ENCODE measurements at regions of chr18 and their contacts with region 1.

Region 1: DNA sequence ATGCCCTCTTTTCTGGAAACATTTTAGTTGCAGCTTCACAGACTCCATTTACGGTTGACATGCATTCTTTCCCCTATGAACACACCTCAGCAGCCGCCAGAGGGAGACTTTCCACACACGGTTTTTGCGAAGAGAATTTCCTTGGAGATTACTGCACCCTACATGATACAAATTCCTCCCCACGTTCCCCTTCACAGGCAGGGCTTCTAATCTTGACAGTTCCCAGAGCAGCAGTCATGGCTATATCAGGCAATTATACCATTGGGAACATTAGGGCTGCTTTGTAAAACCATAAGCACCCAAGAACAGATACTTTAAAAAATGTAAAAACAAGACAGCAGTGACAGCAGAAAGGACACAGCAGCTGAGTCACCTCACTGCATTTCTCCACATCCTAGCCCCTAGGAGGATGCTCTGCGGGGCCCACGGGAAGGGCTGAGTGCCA is 253.8 kb downstream of the TGIF1 start:
- DNase-seq: peak in 1 of 2 experiments; percentile 65
- H3K4me3 ChIP-seq: no peak overlapping the region
- H3K27ac ChIP-seq: no peak overlapping the region
- H3K4me1 ChIP-seq: 0 out of 7 replicates have a peak, but pooled peaks cover 0 to 2% (median 0%) of the 10 kb centered on the region in 4 experiments
- H3K27me3 ChIP-seq: no peaks in the 10 kb centered on the region
- CTCF ChIP-seq: peak; percentile 51 to 76 (median 73)
- EP300 ChIP-seq: no peak
- POLR2A ChIP-seq: no peak
- RAD21 ChIP-seq: peak; percentile 75 to 79

Region 2: DNA sequence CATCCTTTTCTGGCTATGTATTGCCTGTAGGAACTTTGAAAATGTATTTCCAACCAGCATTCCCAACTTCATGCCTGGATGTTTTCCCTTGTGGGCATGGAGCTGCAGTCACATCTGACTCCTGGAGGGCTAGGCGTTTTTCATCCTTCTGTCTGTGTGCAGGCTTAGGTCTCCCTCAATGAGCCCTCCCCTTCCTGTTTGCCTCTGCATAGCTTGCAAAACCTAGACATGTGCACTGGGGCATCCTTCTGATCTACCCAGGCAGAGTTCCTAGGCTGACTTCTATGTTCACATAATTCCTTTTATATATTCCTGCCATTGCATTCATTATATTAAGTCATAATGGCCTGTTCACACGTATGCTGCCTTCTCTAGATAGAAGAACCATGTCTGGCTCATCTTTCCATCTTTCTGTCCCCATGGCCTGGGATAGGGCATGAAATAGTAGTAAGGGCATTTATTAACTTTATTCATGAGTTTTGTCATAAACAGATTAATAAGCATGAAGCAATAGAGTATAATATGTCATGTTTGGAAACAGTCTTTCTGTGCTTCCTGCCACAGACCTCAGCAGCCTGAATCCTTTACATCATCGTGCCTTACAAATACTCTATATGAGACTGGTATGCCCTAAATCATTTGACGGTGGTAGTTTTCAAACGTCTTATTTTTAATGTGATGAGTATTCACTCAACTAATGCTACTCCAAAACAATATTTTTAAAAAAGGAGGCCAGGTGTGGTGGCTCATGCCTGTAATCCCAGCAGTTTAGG is 58.2 kb before region 1 on chr18:
- CTCF ChIA-PET with region 1: no interaction called
- POLR2A ChIA-PET with region 1: no interaction called
- DNase-seq: no peak
- H3K4me3 ChIP-seq: no peak overlapping the region
- H3K27ac ChIP-seq: no peak overlapping the region
- H3K4me1 ChIP-seq: peaks cover 0 to 8% (median 3%) of the 10 kb centered on the region in 4 experiments; a peak in 4 of 7 replicates
- H3K27me3 ChIP-seq: no peaks in the 10 kb centered on the region
- CTCF ChIP-seq: no peak
- EP300 ChIP-seq: no peak
- POLR2A ChIP-seq: no peak
- RAD21 ChIP-seq: no peak

Region 3: DNA sequence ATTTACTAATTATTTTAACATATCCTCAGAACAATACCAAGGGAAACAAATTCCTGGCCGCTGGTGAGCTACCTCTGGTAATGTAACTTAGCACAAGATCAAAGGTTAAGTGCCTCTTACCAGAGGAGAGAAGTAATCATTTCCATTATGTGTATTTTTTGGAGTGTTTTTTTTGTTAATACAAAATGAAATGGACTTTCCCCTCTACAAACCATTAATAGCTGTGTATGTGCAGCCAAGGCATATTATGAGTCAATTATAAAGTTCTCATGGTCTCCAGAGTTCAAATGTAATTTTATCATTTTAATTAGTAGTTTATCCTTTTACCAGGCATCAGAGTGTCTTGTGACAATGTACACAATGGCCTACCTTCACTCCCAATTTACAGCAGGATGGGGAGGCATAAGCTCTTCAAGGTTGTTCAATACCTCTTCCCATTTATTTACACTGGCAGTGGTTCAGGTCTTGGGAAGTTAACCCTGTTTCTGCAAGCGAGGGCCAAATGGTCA is 11.6 kb before region 1 on chr18:
- CTCF ChIA-PET with region 1: interaction called, 18 read pairs
- POLR2A ChIA-PET with region 1: no interaction called
- DNase-seq: no peak
- H3K4me3 ChIP-seq: no peak overlapping the region
- H3K27ac ChIP-seq: no peak overlapping the region
- H3K4me1 ChIP-seq: peaks cover 0 to 6% (median 0%) of the 10 kb centered on the region in 4 experiments; a peak in 2 of 7 replicates
- H3K27me3 ChIP-seq: no peaks in the 10 kb centered on the region
- CTCF ChIP-seq: no peak
- EP300 ChIP-seq: no peak
- POLR2A ChIP-seq: no peak
- RAD21 ChIP-seq: no peak

Region 4: DNA sequence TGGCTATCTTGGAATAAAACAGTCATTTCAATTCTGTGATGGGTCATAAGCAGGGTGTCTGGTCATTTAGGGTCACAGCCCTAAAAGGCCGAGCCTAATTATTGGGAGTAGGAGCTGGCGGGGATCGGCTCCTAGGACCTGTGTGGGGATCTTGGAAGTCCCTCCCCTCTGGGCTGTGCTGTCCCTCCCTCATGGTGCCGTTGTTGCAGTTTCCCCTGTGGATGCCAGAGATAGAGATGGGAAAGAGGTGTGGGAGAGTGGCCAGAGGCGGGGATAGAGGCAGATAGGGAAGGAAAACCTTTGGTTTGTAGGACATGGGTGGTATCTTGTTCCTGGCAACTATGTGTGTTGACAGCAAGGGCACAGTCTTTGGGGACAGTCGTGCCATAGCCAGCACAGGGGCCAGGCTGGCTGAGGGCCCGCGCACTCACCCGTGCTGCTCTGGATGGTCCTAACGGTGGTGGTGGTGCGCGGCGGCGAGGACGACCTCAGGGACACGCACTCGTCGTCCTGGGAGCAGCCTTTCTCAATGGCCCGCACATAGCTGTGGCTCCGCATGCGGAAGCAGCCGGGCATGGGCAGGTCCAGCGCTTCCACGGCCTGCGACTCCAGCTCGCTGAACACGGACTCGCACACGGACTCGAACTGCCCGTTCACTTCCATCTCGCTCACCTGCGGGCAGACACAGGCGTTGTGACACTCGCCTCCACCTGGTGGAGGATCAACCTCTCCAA is 25.1 kb after region 1 on chr18:
- CTCF ChIA-PET with region 1: interaction called, 10 read pairs
- POLR2A ChIA-PET with region 1: no interaction called
- DNase-seq: no peak
- H3K4me3 ChIP-seq: no peak overlapping the region
- H3K27ac ChIP-seq: no peak overlapping the region
- H3K4me1 ChIP-seq: no peaks in the 10 kb centered on the region
- H3K27me3 ChIP-seq: no peaks in the 10 kb centered on the region
- CTCF ChIP-seq: no peak
- EP300 ChIP-seq: no peak
- POLR2A ChIP-seq: no peak
- RAD21 ChIP-seq: no peak